T-cell (primary cell): ENCODE measurements at regions of chrX and their contacts with region 1.

Region 1: DNA sequence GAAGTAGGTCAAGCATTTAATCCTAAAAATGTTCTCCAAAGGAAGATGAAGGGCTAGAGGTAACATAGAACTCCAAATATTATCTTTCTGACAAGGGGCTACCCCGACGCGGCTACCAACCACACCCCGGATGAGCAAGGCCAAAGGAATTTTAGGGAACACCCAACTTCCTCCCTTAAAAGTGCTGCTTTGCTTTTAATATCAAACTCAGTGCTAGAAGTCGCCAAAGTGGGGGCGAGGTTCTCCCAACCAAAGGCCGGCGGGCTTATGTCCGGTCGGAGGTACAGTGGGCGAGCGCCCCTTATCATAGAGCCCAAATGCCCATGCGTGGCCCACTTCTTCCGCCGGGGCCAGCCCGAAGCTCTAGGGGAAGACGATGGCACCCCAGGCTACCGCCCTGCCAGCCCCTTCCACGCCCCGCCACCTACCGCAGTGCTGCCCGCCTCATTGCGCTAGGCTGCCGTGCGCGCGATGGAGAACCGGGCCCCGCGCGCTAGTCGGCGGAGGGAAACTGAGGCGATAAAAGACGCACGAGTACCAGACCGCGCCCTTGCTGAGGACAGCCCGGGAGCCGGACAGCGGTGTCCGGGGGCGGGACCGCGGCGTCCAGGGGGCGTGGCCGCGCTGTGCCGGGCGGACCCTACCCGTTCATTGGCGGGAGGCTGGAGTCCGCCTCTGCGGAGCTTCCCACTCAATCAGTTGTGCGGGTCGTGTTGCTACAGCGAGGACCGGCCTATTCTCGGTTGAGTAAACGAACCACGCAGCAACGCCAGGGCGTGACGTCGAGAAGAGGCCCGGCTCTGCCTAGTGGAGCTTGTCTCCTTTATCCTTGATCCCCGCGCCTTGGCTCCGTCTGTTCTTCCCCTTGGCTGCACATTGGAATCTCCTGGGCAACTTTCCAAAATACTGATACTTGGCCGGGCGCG is at the start of gene ACOT9:
- DNase-seq: peak; percentile 31 to 76 (median 61)
- ATAC-seq: peak; percentile 88 to 92 (median 90)
- H3K4me3 ChIP-seq: peak within 1 kb of the TSS; percentile 70 to 73
- H3K4me3 Mint-ChIP-seq: peak within 1 kb of the TSS; percentile 66 to 88 (median 77)
- H3K27ac ChIP-seq: peak within 1 kb of the TSS; percentile 66
- H3K27ac Mint-ChIP-seq: peak within 1 kb of the TSS; percentile 71 to 79
- H3K4me1 ChIP-seq: peaks cover 0 to 31% of the 10 kb centered on the region in 2 experiments
- H3K4me1 Mint-ChIP-seq: peaks cover 13 to 37% (median 23%) of the 10 kb centered on the region in 3 donors
- H3K27me3 ChIP-seq: no peaks in the 10 kb centered on the region
- H3K27me3 Mint-ChIP-seq: no peaks in the 10 kb centered on the region
- total RNA-seq, gene ACOT9: 15.0 to 22.1 (median 19.2) TPM

Region 2: DNA sequence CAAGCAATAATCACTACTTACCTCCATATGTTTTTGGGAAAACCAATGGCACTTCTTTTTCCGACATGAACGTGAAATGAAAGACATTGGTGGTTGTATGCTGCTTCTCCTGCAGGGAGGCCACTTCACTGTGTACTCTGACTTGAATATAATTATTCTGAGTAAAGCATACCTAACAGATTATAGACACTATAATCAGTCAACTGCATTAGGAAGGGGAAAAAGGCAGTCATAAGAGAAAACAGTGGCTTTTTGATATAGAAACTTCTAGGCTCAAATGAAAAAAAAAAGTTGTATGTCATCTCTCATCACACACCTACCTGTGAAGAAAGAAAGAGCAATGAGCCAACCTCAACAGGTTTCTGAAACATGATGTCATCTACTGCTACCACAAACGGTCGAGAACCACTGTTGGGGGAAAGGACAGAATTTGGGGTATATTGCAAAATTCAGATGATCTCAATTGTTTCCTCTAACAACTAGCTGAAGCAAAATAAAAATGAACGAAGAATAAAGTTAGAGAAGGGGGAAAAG is 38.2 kb before region 1 on chrX:
- CTCF ChIA-PET with region 1: no interaction called
- POLR2A ChIA-PET with region 1: no interaction called
- DNase-seq: no peak
- ATAC-seq: no peak
- H3K4me3 ChIP-seq: no peak overlapping the region
- H3K4me3 Mint-ChIP-seq: no peak overlapping the region
- H3K27ac ChIP-seq: no peak overlapping the region
- H3K27ac Mint-ChIP-seq: no peak overlapping the region
- H3K4me1 ChIP-seq: no peaks in the 10 kb centered on the region
- H3K4me1 Mint-ChIP-seq: peaks cover 0 to 3% (median 3%) of the 10 kb centered on the region in 3 donors
- H3K27me3 ChIP-seq: no peaks in the 10 kb centered on the region
- H3K27me3 Mint-ChIP-seq: no peaks in the 10 kb centered on the region

Region 3: GRCh38 chrX:23782863-23783568 is 40.1 kb after region 1 on chrX and contains the start of gene SAT1:
- CTCF ChIA-PET with region 1: interaction called in 1 of 2 experiments, 4 read pairs
- POLR2A ChIA-PET with region 1: interaction called, 6 to 11 read pairs
- DNase-seq: peak; percentile 82 to 95 (median 92)
- ATAC-seq: peak; percentile 90 to 95 (median 94)
- H3K4me3 ChIP-seq: peak within 1 kb of the TSS; percentile 62 to 90
- H3K4me3 Mint-ChIP-seq: peak within 1 kb of the TSS; percentile 94 to 95 (median 94)
- H3K27ac ChIP-seq: peak within 1 kb of the TSS; percentile 93
- H3K27ac Mint-ChIP-seq: peak within 1 kb of the TSS; percentile 95
- H3K4me1 ChIP-seq: peaks cover 14 to 18% of the 10 kb centered on the region in 2 experiments
- H3K4me1 Mint-ChIP-seq: peaks cover 34 to 40% (median 40%) of the 10 kb centered on the region in 3 donors
- H3K27me3 ChIP-seq: no peaks in the 10 kb centered on the region
- H3K27me3 Mint-ChIP-seq: no peaks in the 10 kb centered on the region
- total RNA-seq, gene SAT1: 89.6 to 258 (median 94.4) TPM